Left cardiac atrium (tissue), 4 donors: ENCODE measurements at regions of chr1 and their contacts with region 1.

Region 1: DNA sequence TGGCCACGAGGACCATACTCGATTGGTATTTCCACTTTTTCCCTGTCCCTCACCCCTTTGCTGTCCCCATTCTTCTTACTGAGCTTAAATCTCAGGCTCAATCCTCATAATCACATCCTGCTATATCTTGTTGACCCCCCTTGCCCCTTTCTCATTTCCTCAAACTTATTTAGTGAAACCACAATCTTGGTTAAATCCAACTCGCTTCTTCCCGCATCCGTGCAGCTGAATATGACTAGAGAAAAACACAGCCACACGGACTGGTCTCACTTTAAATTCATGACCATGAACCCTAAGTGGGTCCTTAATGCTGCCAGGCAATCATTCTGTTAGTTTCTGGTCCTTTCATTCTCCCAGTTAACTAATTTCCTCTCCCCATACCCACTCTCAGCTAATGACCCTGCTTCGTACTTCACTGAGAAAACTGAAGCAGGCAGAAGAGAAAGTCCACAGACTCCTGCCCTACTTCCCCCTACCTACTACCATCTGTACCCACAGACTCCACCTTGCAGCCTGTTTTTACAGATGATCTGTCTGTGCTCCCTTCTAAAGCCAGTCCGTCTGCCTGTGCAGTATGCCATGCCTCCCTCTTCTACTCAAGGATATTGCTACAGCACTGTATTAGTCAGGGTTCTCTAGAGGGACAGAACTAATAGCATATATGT is 96.8 kb upstream of the LMO4 start:
- DNase-seq: no peak
- ATAC-seq: no peak

Region 2: DNA sequence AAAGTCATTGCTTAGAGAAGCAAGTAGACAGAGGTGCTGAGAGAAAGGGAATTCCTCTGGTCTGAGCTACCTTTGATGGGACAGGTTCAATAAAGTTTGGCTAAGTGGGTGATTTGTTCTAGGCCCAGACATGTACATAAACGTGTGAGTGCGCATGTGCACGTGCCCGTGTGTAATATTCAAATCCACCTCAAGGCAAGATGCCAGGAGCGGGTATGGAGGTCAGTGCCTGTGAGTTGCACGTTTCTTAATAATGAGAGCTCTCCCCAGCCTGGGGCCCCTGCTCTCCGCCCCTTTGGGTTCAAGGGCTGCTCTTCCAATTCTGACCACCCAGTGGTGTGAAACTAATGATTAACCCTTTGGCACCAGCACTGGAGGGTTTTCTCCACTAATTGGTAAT is 43.0 kb after region 1 on chr1:
- intact Hi-C with region 1: loop called in 1 of 2 experiments (anchors 2 kb)
- DNase-seq: no peak
- ATAC-seq: no peak

Region 3: GRCh38 chr1:87328272-87329050 is 96.6 kb after region 1 on chr1 and contains the start of gene LMO4:
- intact Hi-C with region 1: no loop called
- DNase-seq: peak; percentile 97
- ATAC-seq: peak; percentile 85
- total RNA-seq, gene LMO4: 43.2 to 50.6 TPM